Motor neuron (in vitro differentiated cells): ENCODE measurements at regions of chr3 and their contacts with region 1.

Region 1: DNA sequence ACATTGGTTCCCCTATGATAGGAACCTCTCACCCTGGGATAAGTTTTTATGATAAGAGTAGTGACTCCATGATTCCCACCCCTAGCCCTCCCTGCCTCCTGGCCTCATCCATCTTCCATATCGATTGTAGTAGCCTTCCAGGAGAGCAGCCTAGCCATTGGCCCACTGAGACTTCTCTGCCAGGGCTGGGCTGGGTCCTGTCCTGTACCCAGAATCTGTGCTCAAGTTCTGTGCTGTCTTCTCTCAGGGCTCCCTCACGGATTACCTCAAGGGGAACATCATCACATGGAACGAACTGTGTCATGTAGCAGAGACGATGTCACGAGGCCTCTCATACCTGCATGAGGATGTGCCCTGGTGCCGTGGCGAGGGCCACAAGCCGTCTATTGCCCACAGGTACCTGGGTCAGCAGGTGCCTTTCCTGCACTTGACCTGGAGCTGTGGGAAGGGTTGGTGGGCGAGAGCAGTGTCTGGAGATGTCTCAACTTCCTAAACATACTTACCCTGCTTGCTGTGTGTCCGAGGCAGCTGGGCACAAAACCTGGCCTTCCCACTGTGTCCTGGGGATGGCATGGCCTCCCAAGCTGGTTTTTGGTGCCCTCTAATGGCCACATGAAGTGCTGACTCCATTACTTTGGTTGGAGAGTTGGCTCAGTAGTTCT is 16.6 kb upstream of the EXOG start:
- ATAC-seq: peak in 7 of 8 experiments; percentile 40 to 98 (median 87)
- H3K4me3 ChIP-seq: no peak overlapping the region
- H3K27ac ChIP-seq: no peak overlapping the region
- H3K4me1 ChIP-seq: no peaks in the 10 kb centered on the region

Region 2: GRCh38 chr3:38268526-38268925 is 211.0 kb before region 1 on chr3:
- in situ Hi-C with region 1: loop called in 1 of 9 experiments (anchors 10 kb)
- ATAC-seq: no peak
- H3K4me3 ChIP-seq: no peak overlapping the region
- H3K27ac ChIP-seq: no peak overlapping the region
- H3K4me1 ChIP-seq: peaks cover 4 to 21% of the 10 kb centered on the region in 2 donors

Region 3: GRCh38 chr3:38346587-38347410 is 132.8 kb before region 1 on chr3 and contains the start of gene XYLB:
- in situ Hi-C with region 1: loop called in 1 of 9 experiments (anchors 10 kb)
- ATAC-seq: peak; percentile 95 to 99 (median 98)
- H3K4me3 ChIP-seq: peak within 1 kb of the TSS; percentile 50 to 85 (median 57)
- H3K27ac ChIP-seq: no peak within 1 kb of the TSS
- H3K4me1 ChIP-seq: peaks cover 2 to 8% of the 10 kb centered on the region in 2 donors
- total RNA-seq, gene XYLB: 2.5 to 14.2 (median 5.1) TPM